HepG2 (cell line): ENCODE measurements at regions of chr2 and their contacts with region 1.

Region 1: GRCh38 chr2:15159751-15160177 is 401.4 kb downstream of the NBAS start:
- DNase-seq: peak; percentile 49
- ATAC-seq: peak; percentile 55
- H3K4me3 ChIP-seq: no peak overlapping the region
- H3K27ac ChIP-seq: no peak overlapping the region
- H3K4me1 ChIP-seq: peaks cover 28% of the 10 kb centered on the region
- H3K27me3 ChIP-seq: no peaks in the 10 kb centered on the region
- CTCF ChIP-seq: peak; percentile 64
- EP300 ChIP-seq: no peak
- POLR2A ChIP-seq: no peak
- RAD21 ChIP-seq: peak; percentile 42; the same call in 1 of the 2 replicates

Region 2: GRCh38 chr2:14903709-14904374 is 255.9 kb before region 1 on chr2:
- CTCF ChIA-PET with region 1: interaction called, 10 read pairs
- POLR2A ChIA-PET with region 1: no interaction called
- in situ Hi-C with region 1: no loop called
- intact Hi-C with region 1: loop called (anchors 10 kb)
- DNase-seq: peak; percentile 72
- ATAC-seq: peak; percentile 99
- H3K4me3 ChIP-seq: no peak overlapping the region
- H3K27ac ChIP-seq: no peak overlapping the region
- H3K4me1 ChIP-seq: no peaks in the 10 kb centered on the region
- H3K27me3 ChIP-seq: no peaks in the 10 kb centered on the region; a peak in 1 of 5 replicates
- CTCF ChIP-seq: peak; percentile 87
- EP300 ChIP-seq: no peak
- POLR2A ChIP-seq: no peak
- RAD21 ChIP-seq: peak; percentile 89

Region 3: DNA sequence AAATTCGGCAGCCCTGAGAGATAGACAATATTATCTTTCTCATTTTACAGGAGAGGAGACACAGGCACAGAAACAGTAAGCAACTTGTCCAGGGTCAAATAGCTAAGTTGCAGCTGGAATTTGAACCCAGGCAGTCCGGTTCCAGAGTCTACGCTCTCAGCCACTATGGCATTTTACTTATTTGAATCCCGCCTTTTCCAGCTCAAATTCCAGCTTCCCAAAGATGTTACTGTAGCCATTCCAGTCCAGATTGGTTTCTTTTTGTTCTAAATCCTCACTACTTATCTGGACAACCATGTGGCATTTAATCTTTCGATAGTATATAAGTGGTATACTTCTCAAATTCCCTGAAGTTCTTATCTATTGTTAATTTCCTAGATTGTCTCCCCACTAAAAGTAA is 275.7 kb after region 1 on chr2:
- CTCF ChIA-PET with region 1: no interaction called
- POLR2A ChIA-PET with region 1: no interaction called
- in situ Hi-C with region 1: no loop called
- intact Hi-C with region 1: loop called (anchors 10 kb)
- DNase-seq: peak; percentile 86
- ATAC-seq: peak; percentile 96
- H3K4me3 ChIP-seq: no peak overlapping the region; a peak in 1 of 6 replicates
- H3K27ac ChIP-seq: peak overlapping the region; percentile 63
- H3K4me1 ChIP-seq: peaks cover 42% of the 10 kb centered on the region
- H3K27me3 ChIP-seq: no peaks in the 10 kb centered on the region
- CTCF ChIP-seq: no peak
- EP300 ChIP-seq: peak in 1 of 2 experiments; percentile 72; a peak in 1 of 4 replicates
- POLR2A ChIP-seq: no peak
- RAD21 ChIP-seq: no peak

Region 4: DNA sequence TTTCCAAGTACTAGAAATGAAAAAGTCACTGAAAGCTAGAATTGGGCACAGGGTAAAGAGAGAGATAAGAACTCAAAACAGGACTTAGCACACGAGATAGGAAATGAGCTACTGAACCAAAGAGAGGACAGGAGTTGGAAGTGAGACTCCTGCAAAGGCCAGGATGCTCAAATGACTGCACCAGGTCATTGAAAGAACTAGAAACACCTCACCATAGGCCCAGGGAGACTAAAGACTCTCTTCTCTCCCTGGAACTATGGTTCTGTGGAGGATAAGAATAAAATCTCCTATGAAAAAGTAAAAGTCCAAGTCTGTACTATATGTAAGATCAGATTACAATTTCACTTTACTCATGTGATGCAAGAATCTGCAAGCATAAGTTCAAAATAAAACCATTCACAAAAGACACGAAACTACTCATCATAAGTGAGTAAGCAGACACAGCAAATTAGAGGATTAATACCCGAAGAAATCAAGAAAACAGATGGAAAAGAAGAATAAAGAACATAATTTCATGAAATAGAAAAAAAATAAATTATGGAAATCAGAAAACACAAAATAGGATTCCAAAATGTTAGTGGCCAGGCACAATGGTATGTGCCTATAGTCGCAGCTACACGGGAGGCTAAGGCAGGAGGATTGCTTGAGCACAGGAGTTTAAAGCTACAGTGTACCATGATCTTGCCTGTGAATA is 394.9 kb after region 1 on chr2:
- CTCF ChIA-PET with region 1: no interaction called
- POLR2A ChIA-PET with region 1: no interaction called
- in situ Hi-C with region 1: no loop called
- intact Hi-C with region 1: no loop called
- DNase-seq: no peak
- ATAC-seq: no peak
- H3K4me3 ChIP-seq: no peak overlapping the region
- H3K27ac ChIP-seq: no peak overlapping the region
- H3K4me1 ChIP-seq: peaks cover 24% of the 10 kb centered on the region
- H3K27me3 ChIP-seq: no peaks in the 10 kb centered on the region
- CTCF ChIP-seq: no peak
- EP300 ChIP-seq: no peak
- POLR2A ChIP-seq: no peak
- RAD21 ChIP-seq: no peak